ENCODE measurements at regions of chr16 and their contacts with region 1.

Region 1: GRCh38 chr16:30902029-30902972 is 5.9 kb downstream of the CTF1 start:
- DNase-seq: peak; percentile 77 to 82
- ATAC-seq: peak; percentile 88 to 96
- H3K4me3 ChIP-seq: peak overlapping the region; percentile 49
- H3K27ac ChIP-seq: peak overlapping the region; percentile 89 to 95
- H3K4me1 ChIP-seq: 0 out of 3 replicates have a peak, but pooled peaks cover 1% of the 10 kb centered on the region
- CTCF ChIP-seq: peak; percentile 79
- EP300 ChIP-seq: no peak
- POLR2A ChIP-seq: peak; percentile 59; the same call in 1 of the 2 replicates
- RAD21 ChIP-seq: no peak; a peak in 1 of 5 replicates

Region 2: DNA sequence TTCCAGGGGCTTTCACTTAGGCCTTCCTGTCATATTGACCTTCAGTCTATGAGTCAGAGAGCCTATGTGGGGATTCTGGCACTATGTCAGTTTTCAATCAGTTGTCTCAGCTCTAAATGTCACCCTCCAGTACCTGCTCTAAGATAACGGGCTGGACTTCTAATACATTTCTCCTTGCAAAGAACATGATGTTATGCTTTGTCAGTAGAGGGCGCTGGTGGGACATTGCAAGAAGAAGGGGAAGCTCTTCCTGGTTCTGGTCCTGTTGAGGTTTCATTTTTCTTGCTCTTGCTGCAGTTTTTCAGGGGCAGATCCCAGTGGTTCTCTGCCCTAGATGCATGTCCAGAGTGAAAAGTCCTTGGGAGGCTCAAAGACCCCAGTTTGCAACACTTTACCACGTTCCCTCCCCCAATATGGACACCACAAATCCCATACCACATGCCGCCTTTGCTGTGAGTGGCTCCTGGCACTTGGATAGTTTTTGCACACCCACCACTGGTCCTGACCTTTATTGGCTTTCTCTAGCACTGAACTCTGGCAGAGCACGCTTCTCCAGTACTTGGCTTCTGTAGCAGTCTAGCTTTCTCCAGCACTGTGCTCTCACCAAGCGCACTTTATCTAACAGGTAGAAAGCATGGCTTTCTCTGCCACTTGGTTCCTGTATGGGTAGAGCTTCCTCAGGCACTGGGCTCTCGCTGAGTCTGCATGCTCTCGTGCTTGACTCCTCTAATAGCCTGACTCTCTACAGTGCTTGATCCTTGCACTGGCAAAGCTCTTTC is 57.4 kb before region 1 on chr16:
- CTCF ChIA-PET with region 1: interaction called, 46 read pairs
- POLR2A ChIA-PET with region 1: interaction called, 9 read pairs
- DNase-seq: peak; percentile 87 to 90
- ATAC-seq: peak; percentile 89 to 97
- H3K4me3 ChIP-seq: no peak overlapping the region
- H3K27ac ChIP-seq: peak overlapping the region; percentile 50 to 58; a peak in 5 of 6 replicates
- H3K4me1 ChIP-seq: peaks cover 11% of the 10 kb centered on the region
- CTCF ChIP-seq: peak; percentile 88
- EP300 ChIP-seq: no peak
- POLR2A ChIP-seq: no peak
- RAD21 ChIP-seq: peak; percentile 84 to 91

Region 3: GRCh38 chr16:30887927-30888326 is 14.4 kb before region 1 on chr16:
- CTCF ChIA-PET with region 1: interaction called, 26 read pairs
- POLR2A ChIA-PET with region 1: no interaction called
- DNase-seq: no peak
- ATAC-seq: no peak
- H3K4me3 ChIP-seq: no peak overlapping the region
- H3K27ac ChIP-seq: no peak overlapping the region
- H3K4me1 ChIP-seq: peaks cover 3% of the 10 kb centered on the region; the same call in 2 of the 3 replicates
- CTCF ChIP-seq: no peak
- EP300 ChIP-seq: no peak
- POLR2A ChIP-seq: no peak
- RAD21 ChIP-seq: no peak

Region 4: GRCh38 chr16:30924076-30924912 is 22.0 kb after region 1 on chr16:
- CTCF ChIA-PET with region 1: interaction called, 13 read pairs
- POLR2A ChIA-PET with region 1: interaction called, 3 read pairs
- DNase-seq: no peak
- ATAC-seq: no peak
- H3K4me3 ChIP-seq: peak overlapping the region; percentile 87
- H3K27ac ChIP-seq: peak overlapping the region; percentile 95 to 99
- H3K4me1 ChIP-seq: peaks cover 15% of the 10 kb centered on the region; the same call in 2 of the 3 replicates
- CTCF ChIP-seq: no peak
- EP300 ChIP-seq: no peak
- POLR2A ChIP-seq: no peak
- RAD21 ChIP-seq: no peak

Region 5: DNA sequence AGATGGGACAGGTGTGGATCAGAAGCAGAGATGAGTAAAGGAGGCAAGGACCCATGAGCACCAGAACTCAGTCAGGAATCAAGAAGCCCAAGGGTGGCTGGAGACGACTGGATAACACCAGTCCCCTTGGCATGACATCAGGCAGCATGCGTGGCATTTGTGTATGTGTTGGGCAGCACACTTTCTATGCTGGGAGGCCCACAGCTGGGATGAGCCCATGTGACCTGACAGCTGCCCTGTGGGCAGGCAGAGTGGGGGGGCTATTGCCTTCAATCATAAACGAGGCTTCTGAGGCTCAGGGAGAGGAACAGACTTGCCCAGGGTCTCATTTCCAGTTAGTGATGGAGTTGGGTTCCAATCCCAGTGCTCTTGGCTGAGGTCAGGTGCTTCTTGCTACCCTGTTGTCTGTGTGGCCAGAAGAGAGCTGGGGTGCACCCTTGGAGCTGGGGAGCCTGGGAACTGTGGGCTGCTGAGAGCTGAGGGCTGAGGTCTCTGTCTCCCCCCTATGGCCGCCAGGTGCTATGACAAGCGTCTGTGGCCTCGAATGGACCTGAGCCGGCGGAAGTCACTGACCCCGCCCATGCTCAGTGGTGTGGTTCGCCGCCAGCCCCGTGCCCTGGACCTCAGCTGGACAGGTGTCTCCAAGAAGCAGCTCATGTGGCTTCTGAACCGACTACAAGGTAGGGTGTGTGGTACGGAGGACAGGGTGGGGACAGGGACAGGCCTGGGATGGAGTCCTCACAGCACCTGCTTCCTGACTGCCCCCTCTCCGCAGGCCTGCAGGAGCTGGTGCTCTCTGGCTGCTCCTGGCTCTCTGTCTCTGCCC is 39.5 kb after region 1 on chr16:
- CTCF ChIA-PET with region 1: interaction called, 41 read pairs
- POLR2A ChIA-PET with region 1: interaction called, 6 read pairs
- DNase-seq: peak; percentile 77 to 87
- ATAC-seq: peak; percentile 89 to 96
- H3K4me3 ChIP-seq: no peak overlapping the region
- H3K27ac ChIP-seq: peak overlapping the region; percentile 39 to 73; a peak in 4 of 6 replicates
- H3K4me1 ChIP-seq: peaks cover 19% of the 10 kb centered on the region
- CTCF ChIP-seq: peak; percentile 75
- EP300 ChIP-seq: no peak
- POLR2A ChIP-seq: no peak
- RAD21 ChIP-seq: peak; percentile 77 to 80

Measured in A549 (cell line).